ENCODE measurements at regions of chr14 and their contacts with region 1.

Region 1: GRCh38 chr14:73026845-73027542 is at the start of gene ZFYVE1:
- DNase-seq: peak; percentile 99
- total RNA-seq, gene ZFYVE1: 12.1 TPM

Region 2: GRCh38 chr14:72998252-72998903 is 28.6 kb before region 1 on chr14:
- intact Hi-C with region 1: no loop called
- DNase-seq: no peak

Region 3: GRCh38 chr14:73058224-73058921 is 31.4 kb after region 1 on chr14 and contains the start of gene RBM25:
- intact Hi-C with region 1: loop called (anchors 2 kb)
- DNase-seq: peak; percentile 97
- total RNA-seq, gene RBM25: 42.5 TPM

Region 4: GRCh38 chr14:73136387-73137225 is 109.6 kb after region 1 on chr14 and contains the start of gene PSEN1:
- intact Hi-C with region 1: loop called (anchors 5 kb)
- DNase-seq: peak; percentile 99
- total RNA-seq, gene PSEN1: 20.5 TPM

Measured in cardiac septum (tissue), 1 donor.